ENCODE measurements at regions of chr3 and their contacts with region 1.

Region 1: DNA sequence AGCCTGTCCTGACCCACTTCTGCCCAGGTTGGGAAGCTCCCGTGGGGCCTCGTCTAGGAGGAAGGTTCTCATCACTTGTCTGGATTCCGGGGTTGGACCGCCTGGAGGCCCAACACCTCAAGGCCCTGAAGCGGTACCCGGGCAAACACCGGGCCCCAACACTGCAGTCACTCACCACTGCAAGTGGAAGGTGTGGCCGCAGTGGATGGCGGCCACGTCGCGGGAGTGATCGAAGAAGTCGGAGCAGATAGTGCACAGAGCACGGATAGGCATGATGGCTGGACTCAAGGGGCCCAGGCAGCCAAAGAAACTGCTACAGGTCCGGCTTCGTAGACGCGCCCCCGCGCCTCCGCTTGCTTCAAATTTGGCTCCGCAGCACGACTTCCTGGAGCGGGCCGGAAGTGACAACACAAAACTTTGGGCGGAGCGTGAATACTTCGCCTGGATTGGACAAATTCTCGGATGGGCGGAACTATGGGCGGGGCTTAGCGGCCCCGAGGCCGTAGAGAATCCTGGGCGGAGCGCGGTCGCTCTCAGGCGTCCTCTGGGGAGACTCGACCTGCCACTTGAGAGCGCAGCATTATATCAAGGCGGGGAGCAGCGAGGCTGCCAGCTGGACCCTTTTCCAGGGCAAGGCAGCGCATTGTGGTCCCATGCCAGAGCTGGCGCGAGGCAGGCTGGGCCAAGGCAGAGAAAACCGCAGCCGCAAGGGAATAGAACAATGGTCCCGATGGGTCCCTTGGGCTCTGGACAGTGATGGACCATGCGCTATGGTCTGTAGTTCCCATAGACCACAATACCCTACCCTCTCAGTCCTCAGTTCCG is at the start of gene TRAIP:
- DNase-seq: peak; percentile 92 to 94
- H3K4me3 ChIP-seq: peak within 1 kb of the TSS; percentile 87
- H3K4me3 Mint-ChIP-seq: peak within 1 kb of the TSS; percentile 93
- H3K27ac Mint-ChIP-seq: peak within 1 kb of the TSS; percentile 88
- H3K4me1 ChIP-seq: 0 out of 2 replicates have a peak, but pooled peaks cover 4% of the 10 kb centered on the region
- H3K4me1 Mint-ChIP-seq: peaks cover 6% of the 10 kb centered on the region
- H3K27me3 ChIP-seq: no peaks in the 10 kb centered on the region
- H3K27me3 Mint-ChIP-seq: no peaks in the 10 kb centered on the region
- CTCF ChIP-seq: no peak
- total RNA-seq, gene TRAIP: 25.1 and 28.0 TPM in 2 replicates

Region 2: GRCh38 chr3:49831341-49831740 is 25.1 kb before region 1 on chr3:
- CTCF ChIA-PET with region 1: no interaction called
- POLR2A ChIA-PET with region 1: no interaction called
- intact Hi-C with region 1: no loop called
- DNase-seq: no peak
- H3K4me3 ChIP-seq: no peak overlapping the region
- H3K4me3 Mint-ChIP-seq: no peak overlapping the region
- H3K27ac Mint-ChIP-seq: no peak overlapping the region
- H3K4me1 ChIP-seq: no peaks in the 10 kb centered on the region
- H3K4me1 Mint-ChIP-seq: no peaks in the 10 kb centered on the region
- H3K27me3 ChIP-seq: no peaks in the 10 kb centered on the region
- H3K27me3 Mint-ChIP-seq: no peaks in the 10 kb centered on the region
- CTCF ChIP-seq: no peak

Region 3: DNA sequence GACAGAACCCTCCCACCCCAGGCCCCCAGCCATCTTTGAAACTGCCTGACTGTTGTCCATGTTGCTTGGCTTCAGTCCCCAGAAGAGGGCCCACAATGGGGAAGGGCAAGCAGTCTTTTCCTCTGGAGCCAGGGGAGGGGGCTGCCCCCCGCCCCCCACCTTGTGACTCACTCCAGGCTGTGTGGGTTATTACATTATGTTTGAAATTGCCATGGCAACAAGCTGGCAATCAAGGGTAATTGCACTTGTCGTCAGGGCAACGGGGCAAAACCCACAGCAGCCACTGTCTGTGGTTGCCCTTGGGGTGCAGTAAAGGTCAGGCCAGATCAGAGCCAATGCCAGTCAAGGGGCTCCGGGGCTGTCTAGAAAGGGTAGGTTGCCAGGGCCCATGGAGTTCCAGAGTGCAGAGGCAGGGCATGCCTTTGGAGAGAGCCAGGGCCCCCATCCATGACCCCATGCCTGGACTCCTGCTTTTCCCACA is 16.4 kb after region 1 on chr3:
- CTCF ChIA-PET with region 1: no interaction called
- POLR2A ChIA-PET with region 1: no interaction called
- intact Hi-C with region 1: loop called (anchors 1 kb)
- DNase-seq: peak in 1 of 2 experiments; percentile 25
- H3K4me3 ChIP-seq: no peak overlapping the region
- H3K4me3 Mint-ChIP-seq: no peak overlapping the region
- H3K27ac Mint-ChIP-seq: peak overlapping the region; percentile 65
- H3K4me1 ChIP-seq: peaks cover 41% of the 10 kb centered on the region
- H3K4me1 Mint-ChIP-seq: peaks cover 13% of the 10 kb centered on the region
- H3K27me3 ChIP-seq: no peaks in the 10 kb centered on the region
- H3K27me3 Mint-ChIP-seq: no peaks in the 10 kb centered on the region
- CTCF ChIP-seq: no peak

Measured in Caco-2 (cell line).